ENCODE measurements at regions of chr1 and their contacts with region 1.

Region 1: GRCh38 chr1:212062832-212063438 is 27.4 kb downstream of the DTL start:
- DNase-seq: peak; percentile 24
- H3K4me3 ChIP-seq: no peak overlapping the region
- CTCF ChIP-seq: peak; percentile 60

Region 2: GRCh38 chr1:212284744-212285684 is 222.1 kb after region 1 on chr1 and contains the start of gene PPP2R5A:
- in situ Hi-C with region 1: loop called (anchors 25 kb)
- DNase-seq: peak; percentile 98
- H3K4me3 ChIP-seq: peak within 1 kb of the TSS; percentile 92
- CTCF ChIP-seq: peak; percentile 18

Region 3: DNA sequence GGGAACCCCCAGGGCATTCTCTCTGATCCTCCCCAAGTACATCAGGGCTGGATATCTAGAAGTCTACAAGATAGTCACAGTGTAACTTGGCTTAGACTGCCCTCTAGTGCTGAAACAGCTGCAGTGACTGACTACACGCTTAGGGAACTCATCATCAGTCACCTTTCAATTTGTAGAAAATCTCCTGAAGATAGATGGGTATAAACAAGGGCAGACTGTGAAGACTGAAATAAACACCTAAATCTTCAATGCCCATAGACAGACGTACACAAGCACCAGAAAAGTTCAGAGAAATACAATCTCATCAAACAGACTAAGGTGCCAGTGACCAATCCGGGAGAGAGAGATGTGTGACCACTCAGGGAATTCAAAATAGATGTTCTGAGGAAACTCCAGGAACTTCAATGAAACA is 305.1 kb after region 1 on chr1:
- in situ Hi-C with region 1: loop called (anchors 10 kb)
- DNase-seq: peak; percentile 69
- H3K4me3 ChIP-seq: no peak overlapping the region
- CTCF ChIP-seq: peak; percentile 92